RWPE1 (cell line): ENCODE measurements at regions of chr6 and their contacts with region 1.

Region 1: DNA sequence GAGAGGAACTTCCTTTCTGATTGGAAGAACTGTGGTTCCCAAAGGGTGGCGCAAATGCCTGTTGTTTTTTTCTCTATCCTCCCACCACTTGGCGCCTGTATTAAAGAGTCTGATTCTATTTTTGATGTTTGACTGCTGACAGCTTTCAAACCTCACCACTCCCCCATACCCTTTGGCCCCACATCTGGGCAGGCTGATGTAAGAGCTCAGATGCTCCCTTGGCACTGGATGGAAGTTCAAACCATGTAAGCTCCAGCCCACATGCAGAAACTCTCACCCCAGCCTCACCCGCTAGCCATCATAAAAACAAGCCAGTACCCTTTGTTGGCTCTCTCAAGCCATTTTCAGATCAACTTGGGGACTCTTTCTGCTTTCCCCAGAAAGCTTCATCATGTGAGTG is 20.0 kb upstream of the TMEM14A start:
- DNase-seq: no peak
- H3K27ac ChIP-seq: no peak overlapping the region
- CTCF ChIP-seq: no peak

Region 2: GRCh38 chr6:52517502-52518278 is 133.3 kb before region 1 on chr6:
- CTCF ChIA-PET with region 1: no interaction called
- POLR2A ChIA-PET with region 1: no interaction called
- DNase-seq: peak; percentile 96
- H3K27ac ChIP-seq: peak overlapping the region; percentile 98
- CTCF ChIP-seq: no peak

Region 3: GRCh38 chr6:52577022-52577777 is 73.7 kb before region 1 on chr6 and contains the start of gene TRAM2:
- CTCF ChIA-PET with region 1: interaction called, 10 read pairs
- POLR2A ChIA-PET with region 1: no interaction called
- DNase-seq: peak; percentile 77
- H3K27ac ChIP-seq: peak within 1 kb of the TSS; percentile 95
- CTCF ChIP-seq: no peak

Region 4: DNA sequence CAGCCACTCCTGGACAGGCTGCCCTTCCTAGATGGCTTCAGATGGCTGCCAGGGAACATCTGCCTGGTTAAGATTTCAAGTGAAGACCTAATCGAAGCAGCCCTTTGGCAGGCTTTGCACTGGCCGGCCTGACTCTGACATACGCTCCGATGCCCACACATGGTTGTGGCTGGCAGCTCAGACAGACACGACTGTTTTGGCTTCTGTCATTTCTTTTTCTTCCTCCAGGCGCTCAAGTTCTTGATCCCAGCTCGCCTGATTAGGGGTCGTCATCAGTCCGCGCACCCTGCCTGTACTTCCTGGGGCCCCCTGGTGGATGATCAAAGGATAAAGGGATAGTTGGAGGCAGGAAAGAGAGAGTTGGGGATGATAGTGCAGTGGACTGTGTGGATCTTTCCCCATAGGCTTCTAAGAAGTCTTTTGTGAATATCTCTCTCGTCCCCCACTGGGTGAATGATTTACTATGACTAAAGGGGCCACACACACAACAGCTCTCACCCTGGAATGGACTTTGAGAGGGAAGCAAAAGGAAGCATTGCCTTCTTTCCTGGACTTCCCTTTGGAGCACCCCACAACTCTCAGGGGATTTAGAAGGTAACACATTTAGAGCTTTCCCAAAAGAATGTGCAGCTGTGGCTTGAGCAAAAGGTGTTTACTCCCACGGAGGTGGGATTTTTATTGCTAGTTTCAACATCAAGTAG is 52.7 kb before region 1 on chr6:
- CTCF ChIA-PET with region 1: no interaction called
- POLR2A ChIA-PET with region 1: no interaction called
- DNase-seq: peak; percentile 52
- H3K27ac ChIP-seq: no peak overlapping the region
- CTCF ChIP-seq: peak; percentile 28; the same call in 1 of the 2 replicates

Region 5: GRCh38 chr6:52635049-52635577 is 15.8 kb before region 1 on chr6:
- CTCF ChIA-PET with region 1: interaction called, 12 read pairs
- POLR2A ChIA-PET with region 1: no interaction called
- DNase-seq: no peak
- H3K27ac ChIP-seq: no peak overlapping the region
- CTCF ChIP-seq: no peak

Region 6: DNA sequence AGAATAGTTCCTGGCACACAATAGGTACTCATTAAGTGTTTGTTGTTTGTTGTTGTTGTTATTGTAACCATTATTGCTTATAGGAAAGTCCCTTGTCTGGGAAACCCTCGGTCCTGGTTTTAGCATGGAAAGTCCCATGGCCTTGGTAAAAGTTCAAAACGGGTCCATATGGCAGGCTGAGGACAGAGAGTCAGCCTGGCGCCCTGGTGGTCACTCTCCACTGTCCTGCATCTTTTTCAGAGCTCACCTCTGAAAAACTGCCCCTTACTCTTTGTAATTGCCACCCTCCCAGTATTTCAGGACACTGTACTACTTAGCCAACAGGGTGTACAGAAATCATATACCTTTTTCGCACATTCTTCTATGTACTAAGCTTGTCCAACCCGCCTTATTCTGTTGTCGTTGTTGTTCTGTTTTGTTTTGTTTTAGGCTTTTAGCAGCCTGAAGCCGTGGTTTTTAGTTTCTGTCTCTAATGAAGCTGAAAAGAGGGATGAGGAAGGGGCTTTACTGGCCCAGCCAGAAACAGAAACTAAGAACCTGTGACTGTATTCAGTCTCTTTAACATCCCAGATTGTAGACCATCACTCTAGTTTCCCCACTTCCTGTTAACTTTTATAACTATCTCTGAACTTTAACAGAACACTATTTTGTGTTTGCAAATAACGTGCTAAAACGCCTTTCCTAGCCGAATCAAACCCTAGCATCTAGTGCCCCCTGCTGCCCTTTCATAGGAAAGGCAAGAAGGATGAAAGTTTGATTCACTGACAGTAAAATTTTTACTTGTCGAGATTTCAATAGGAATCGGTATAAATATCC is 12.4 kb after region 1 on chr6:
- CTCF ChIA-PET with region 1: interaction called, 12 read pairs
- POLR2A ChIA-PET with region 1: no interaction called
- DNase-seq: peak; percentile 64
- H3K27ac ChIP-seq: peak overlapping the region; percentile 76
- CTCF ChIP-seq: peak; percentile 81